Posterior vena cava (tissue), 2 donors: ENCODE measurements at regions of chr7 and their contacts with region 1.

Region 1: DNA sequence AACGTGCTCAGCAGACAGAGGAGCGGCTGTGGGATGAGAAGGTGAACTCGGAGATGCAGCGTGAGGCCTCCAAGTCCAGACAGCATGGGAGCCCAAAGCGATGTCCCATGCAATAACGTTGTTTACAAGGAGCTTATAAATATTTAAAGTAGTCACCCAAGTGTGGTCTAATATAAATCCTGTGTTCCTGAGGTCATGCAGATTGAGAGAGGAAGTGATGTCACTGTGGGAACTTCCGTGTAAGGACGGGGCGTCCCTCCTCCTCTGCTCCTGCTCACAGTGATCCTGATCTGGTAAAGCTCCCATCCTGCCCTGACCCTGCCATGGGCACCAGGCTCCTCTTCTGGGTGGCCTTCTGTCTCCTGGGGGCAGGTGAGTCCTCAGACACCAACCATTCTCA is 94.7 kb upstream of the PRSS58 start:
- DNase-seq: no peak

Region 2: GRCh38 chr7:142168745-142169144 is 183.8 kb before region 1 on chr7:
- intact Hi-C with region 1: no loop called
- DNase-seq: no peak

Region 3: GRCh38 chr7:142323706-142324105 is 28.8 kb before region 1 on chr7:
- intact Hi-C with region 1: loop called in 1 of 2 experiments (anchors 1 kb)
- DNase-seq: no peak

Region 4: DNA sequence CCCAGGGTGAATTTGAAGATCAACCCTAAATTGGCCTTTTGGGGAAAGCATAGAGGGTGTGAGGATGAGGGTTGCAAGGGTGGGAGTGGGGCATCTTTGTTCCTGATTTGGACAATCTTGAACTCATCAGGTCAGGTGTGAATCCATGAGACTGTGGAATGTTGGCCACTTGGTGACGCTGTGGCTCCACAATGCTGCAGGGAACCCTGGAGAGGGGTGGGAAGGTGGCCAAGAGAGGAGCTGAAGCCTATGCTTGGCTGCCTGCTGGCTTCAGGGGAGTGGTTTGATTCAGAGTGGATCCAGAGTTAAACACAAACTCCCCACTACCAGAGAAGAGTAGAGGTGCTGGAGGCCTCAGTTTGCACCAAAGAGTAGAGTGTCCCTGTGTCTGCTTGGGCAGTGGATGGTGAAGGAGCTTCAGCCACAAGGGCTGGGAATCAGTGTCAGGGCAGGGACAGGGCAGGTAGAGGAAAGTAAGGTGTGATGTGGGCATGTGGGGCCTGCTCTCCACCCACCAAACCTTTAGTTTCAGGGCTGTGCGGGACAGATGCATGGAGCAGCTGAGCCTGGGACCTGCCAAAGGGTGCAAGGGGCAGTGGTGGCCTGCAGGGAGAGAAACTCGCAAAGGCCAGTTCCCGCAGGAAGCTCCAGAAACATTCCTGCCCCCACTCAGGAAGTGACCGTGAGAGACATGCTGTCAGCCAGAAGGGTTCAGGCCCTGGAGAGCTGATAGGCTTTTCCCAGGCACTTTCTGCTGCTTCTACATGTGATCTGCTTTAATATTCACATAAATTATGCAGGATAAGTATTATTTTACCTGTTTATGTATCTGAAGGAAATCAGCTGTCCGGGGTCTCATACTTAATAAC is 13.7 kb before region 1 on chr7:
- intact Hi-C with region 1: loop called in 1 of 2 experiments (anchors 1 kb)
- DNase-seq: no peak

Region 5: DNA sequence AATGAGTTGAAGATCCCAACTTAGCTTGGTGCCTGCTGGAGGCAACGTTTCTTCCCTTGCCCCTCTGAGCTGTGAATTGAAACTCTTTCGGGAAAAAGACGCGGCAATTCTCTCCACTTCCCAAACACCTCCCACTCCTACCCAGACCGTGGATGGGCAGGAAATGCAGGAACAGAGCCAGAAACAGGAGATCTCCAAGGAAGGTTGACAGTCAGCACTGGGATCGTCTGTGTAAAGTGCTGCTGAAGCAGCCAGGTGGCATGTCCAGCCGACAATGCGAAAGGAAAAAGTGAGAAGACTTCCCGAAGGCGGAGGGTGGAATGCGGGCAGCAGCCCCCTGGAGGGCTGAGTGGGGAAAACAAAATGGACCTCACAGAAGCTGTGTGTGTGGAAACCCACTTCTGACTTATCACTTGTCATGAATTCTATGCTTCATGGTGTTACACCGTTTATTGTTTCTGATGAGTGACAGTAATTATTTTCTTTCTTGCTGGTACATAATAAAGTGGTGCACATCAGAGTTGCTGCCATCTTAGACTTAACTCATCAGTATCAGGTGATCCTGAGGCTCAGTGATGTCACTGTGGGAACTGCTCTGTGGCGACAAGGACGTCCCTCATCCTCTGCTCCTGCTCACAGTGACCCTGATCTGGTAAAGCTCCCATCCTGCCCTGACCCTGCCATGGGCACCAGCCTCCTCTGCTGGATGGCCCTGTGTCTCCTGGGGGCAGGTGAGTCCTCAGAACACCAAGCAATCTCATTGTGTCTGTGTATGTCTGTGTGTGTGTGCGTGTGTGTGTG is 176.3 kb after region 1 on chr7:
- intact Hi-C with region 1: loop called in 1 of 2 experiments (anchors 1 kb)
- DNase-seq: no peak